Sigmoid colon (tissue), 7 donors: ENCODE measurements at regions of chr12 and their contacts with region 1.

Region 1: DNA sequence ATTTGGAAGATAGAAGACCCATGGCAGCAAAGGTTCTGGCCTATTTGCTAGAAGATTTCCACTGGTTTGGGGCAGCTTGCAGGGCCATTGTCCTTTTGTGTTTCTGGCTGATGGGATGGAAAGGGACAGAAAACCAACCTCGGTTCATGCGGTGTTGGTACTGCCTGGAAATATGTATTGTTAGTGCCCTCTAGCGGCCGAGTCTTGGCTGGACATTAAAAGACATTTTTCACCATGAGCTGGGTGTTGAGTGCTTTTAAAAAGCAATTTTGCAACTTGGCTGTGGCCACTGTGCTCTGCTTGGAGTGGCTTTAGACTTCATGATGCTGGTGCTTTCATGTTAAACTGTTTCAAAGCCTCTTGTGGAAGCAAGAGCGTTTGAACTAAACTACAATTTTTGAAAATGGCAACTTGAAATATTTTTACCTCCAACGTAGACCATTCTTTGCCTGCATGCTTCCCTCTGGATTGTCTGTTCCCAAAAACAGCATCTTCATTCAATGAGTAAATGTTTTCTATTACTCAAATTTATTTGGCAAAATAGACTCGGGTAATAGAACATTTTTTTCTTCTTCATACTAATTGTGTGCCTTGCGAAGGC is 102.7 kb upstream of the TBX5 start:
- DNase-seq: peak; percentile 71
- H3K4me3 ChIP-seq: no peak overlapping the region
- H3K27ac ChIP-seq: no peak overlapping the region
- H3K4me1 ChIP-seq: no peaks in the 10 kb centered on the region
- H3K27me3 ChIP-seq: peaks cover 0 to 42% (median 2%) of the 10 kb centered on the region in 3 donors
- CTCF ChIP-seq: peak in 3 of 4 experiments; percentile 35 to 68 (median 54)
- EP300 ChIP-seq: no peak
- POLR2A ChIP-seq: no peak

Region 2: GRCh38 chr12:113965951-113966797 is 542.5 kb before region 1 on chr12 and contains the start of gene RBM19:
- intact Hi-C with region 1: loop called (anchors 5 kb)
- DNase-seq: peak; percentile 98
- H3K4me3 ChIP-seq: peak within 1 kb of the TSS; percentile 65 to 78 (median 70)
- H3K27ac ChIP-seq: peak within 1 kb of the TSS; percentile 30 to 68 (median 56)
- H3K4me1 ChIP-seq: peaks cover 0 to 15% (median 13%) of the 10 kb centered on the region in 4 donors
- H3K27me3 ChIP-seq: no peaks in the 10 kb centered on the region
- CTCF ChIP-seq: peak; percentile 76 to 89 (median 78)
- EP300 ChIP-seq: no peak
- POLR2A ChIP-seq: no peak
- total RNA-seq, gene RBM19: 22.2 to 42.7 (median 26.2) TPM

Region 3: DNA sequence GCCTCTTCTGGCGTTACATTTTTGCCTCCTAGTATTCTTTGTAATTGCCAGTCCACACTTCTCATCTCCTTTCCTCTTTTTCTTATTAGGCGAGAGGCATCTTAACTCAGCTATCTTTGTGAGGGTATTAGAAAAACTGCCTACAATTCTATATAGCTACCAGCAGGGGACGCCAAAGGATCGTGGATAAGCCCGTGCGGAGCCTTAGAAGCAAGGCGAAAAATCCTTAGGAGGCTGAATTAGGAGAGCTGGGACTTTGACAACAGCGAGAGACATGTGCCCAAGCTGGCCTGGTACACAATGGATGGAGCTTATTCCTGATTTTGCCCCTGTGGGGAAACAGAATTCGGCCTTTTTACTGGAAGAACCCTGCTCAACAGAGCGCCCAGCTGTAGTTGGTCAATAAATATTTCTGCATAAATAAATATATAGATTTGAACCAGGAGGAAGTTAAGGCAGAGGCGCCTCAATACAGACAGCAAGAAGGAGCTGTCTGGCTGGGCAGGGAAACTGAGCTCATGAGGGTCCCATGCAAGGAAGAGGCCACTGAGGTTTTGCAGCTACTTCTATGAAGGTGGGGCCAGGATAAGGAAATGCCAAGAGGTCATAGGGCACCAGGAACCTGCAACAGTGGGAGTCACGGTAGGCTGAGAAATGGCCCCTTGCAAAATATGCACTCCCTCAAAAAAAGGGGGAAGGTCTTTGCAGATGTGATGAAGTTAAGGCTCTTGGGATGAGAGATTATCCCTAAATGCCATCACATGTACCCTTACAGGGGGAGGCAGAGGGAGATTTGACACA is 527.9 kb before region 1 on chr12:
- intact Hi-C with region 1: loop called (anchors 2 kb)
- DNase-seq: no peak
- H3K4me3 ChIP-seq: no peak overlapping the region
- H3K27ac ChIP-seq: no peak overlapping the region
- H3K4me1 ChIP-seq: no peaks in the 10 kb centered on the region
- H3K27me3 ChIP-seq: peaks cover 0 to 46% (median 17%) of the 10 kb centered on the region in 3 donors
- CTCF ChIP-seq: peak; percentile 67 to 90 (median 82)
- EP300 ChIP-seq: no peak
- POLR2A ChIP-seq: no peak

Region 4: DNA sequence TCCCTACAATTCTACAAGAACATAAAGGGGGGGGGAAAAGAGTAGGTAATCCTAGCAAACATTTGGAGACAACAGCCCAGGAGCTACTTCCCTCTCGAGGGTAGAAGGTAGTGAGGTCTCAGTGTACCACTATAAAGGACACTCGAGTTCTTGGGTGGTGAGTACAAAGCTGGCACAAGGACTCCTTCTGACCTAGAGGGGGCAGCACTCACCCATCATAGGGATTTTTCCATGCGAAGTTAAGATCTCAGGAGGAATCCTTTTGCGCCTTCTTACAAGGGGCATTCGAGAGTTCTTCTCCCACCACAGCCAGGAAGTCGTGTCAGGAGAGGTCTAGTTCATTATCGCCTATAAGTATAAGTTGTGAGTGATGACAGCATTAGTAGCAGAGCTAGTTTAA is 342.3 kb before region 1 on chr12:
- intact Hi-C with region 1: loop called (anchors 2 kb)
- DNase-seq: no peak
- H3K4me3 ChIP-seq: no peak overlapping the region
- H3K27ac ChIP-seq: no peak overlapping the region
- H3K4me1 ChIP-seq: peaks cover 0 to 4% (median 0%) of the 10 kb centered on the region in 4 donors
- H3K27me3 ChIP-seq: peaks cover 0 to 10% (median 0%) of the 10 kb centered on the region in 3 donors
- CTCF ChIP-seq: peak in 1 of 4 experiments; percentile 30
- EP300 ChIP-seq: no peak
- POLR2A ChIP-seq: no peak